Dendritic cell treated with granulocyte-macrophage colony-stimulating factor and Interleukin-4, amounts not matched to agents 40 ng/mL and 50 ng/mL, for 4 days (primary cell): ENCODE measurements at regions of chr13 and their contacts with region 1.

Region 1: GRCh38 chr13:110715395-110716235 is 2.1 kb downstream of the ING1 start:
- H3K4me3 Mint-ChIP-seq: peak overlapping the region; percentile 99
- H3K27ac Mint-ChIP-seq: peak overlapping the region; percentile 95
- H3K4me1 Mint-ChIP-seq: peaks cover 27% of the 10 kb centered on the region
- H3K27me3 Mint-ChIP-seq: no peaks in the 10 kb centered on the region

Region 2: DNA sequence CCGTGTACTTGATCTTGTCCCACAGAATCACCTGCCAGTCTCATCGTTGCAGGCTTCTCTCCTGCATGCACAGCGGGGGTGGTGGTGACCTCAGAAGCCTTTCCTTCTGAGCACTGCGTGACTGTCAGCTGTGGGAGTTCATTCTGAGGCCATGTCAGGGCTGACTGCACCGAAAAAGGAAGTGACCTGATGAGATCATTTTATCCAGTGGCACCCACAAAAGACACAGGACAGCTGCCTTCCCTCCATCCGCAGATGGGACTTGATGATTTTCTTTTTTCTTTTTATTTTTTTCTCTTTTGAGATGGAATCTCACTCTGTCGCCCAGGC is 243.8 kb before region 1 on chr13:
- intact Hi-C with region 1: loop called (anchors 2 kb)
- H3K4me3 Mint-ChIP-seq: peak overlapping the region; percentile 66
- H3K27ac Mint-ChIP-seq: peak overlapping the region; percentile 77
- H3K4me1 Mint-ChIP-seq: peaks cover 42% of the 10 kb centered on the region
- H3K27me3 Mint-ChIP-seq: peaks cover 50% of the 10 kb centered on the region

Region 3: DNA sequence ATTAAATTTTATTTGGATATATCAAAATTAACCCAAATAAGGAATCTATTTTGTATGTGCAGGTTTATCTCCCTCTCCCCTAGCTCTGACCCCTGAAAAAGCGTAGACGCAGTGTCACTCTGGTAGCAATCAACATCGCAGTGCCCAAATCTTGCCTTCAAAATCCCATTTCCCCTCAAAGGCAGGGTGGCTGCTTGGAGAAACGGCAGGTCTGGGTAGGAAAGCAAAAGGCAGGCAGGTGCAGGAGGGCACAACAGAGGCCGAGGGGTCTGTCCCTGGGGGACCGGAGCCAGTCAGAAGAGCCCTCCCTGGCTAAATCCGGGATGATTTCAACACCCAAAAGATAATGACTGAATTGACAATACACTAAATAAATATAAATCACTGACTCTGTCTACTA is 58.4 kb before region 1 on chr13:
- intact Hi-C with region 1: loop called (anchors 5 kb)
- H3K4me3 Mint-ChIP-seq: no peak overlapping the region
- H3K27ac Mint-ChIP-seq: no peak overlapping the region
- H3K4me1 Mint-ChIP-seq: peaks cover 43% of the 10 kb centered on the region
- H3K27me3 Mint-ChIP-seq: no peaks in the 10 kb centered on the region

Region 4: DNA sequence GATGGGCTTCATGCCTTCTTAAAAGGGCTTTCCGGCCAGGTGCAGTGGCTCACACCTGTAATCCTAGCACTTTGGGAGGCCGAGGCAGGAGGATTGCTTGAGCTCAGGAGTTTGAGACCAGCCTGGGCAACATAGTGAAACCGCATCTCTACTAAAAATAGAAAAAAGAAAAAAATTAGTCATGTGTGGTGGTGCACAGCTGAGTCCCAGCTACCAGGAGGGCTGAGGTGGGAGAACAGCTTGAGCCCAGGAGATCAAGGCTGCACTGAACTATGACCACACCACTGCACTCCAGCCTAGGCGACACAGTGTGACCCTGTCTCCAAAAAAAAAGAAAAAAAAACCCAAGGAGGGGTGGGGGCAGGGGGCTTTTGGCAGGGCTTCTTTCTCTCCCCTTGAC is 16.9 kb before region 1 on chr13:
- intact Hi-C with region 1: no loop called
- H3K4me3 Mint-ChIP-seq: no peak overlapping the region
- H3K27ac Mint-ChIP-seq: peak overlapping the region; percentile 70
- H3K4me1 Mint-ChIP-seq: peaks cover 55% of the 10 kb centered on the region
- H3K27me3 Mint-ChIP-seq: no peaks in the 10 kb centered on the region

Region 5: GRCh38 chr13:110819203-110820014 is 103.8 kb after region 1 on chr13:
- intact Hi-C with region 1: loop called (anchors 2 kb)
- H3K4me3 Mint-ChIP-seq: no peak overlapping the region
- H3K27ac Mint-ChIP-seq: no peak overlapping the region
- H3K4me1 Mint-ChIP-seq: no peaks in the 10 kb centered on the region
- H3K27me3 Mint-ChIP-seq: peaks cover 11% of the 10 kb centered on the region

Region 6: GRCh38 chr13:111153279-111153976 is 437.8 kb after region 1 on chr13:
- intact Hi-C with region 1: loop called (anchors 5 kb)
- H3K4me3 Mint-ChIP-seq: peak overlapping the region; percentile 94
- H3K27ac Mint-ChIP-seq: peak overlapping the region; percentile 95
- H3K4me1 Mint-ChIP-seq: peaks cover 19% of the 10 kb centered on the region
- H3K27me3 Mint-ChIP-seq: peaks cover 25% of the 10 kb centered on the region